H1 (cell line): ENCODE measurements at regions of chr7 and their contacts with region 1.

Region 1: DNA sequence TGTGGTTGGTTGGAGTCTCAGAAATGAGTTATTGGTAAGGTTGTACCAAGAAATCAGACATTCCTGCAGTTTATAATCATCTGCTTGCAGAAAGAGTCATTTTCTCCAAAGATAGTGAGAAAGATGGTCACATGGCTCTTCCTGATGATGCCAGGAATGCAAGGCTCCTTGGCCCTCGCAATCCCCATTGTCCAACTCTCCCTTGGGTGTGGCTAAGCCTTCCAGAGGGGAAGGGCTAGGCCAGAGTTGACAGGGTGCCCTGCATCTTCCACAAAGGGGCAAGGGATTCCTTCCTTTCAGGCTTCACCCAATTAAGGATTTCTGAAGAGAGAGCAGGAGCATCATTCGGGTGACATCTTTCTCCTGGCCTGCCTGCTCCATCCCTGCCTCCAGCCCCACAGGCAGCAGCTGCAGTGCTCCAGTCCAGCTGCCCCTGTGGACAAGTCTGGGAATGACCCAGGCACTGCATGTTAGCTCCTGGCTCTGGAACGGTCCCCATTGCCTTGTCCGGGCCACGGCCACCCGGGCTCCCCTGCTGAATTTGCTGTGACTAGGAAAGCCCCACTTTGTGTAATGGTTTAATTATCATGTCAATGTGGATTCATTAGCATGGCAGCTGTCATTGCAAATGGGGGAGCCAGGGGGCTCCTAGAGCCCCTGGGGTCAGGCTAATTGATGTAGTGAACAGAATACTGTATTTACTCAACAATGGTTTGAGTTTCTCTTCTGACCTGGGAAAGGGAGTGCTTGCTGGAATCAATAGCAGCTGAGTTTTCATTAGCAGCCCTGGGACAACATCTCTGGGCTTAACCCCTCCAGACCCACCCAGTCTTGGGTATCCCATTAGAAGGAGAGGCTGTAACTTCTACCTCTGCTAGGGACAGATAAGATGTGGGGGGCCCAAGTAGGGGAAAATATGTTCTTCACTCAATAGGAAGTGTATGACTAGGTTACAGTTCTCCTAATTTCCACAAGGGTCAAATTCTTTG is 112.6 kb upstream of the TBX20 start:
- DNase-seq: peak; percentile 43 to 67
- H3K4me3 ChIP-seq: peak overlapping the region in 1 of 4 experiments; percentile 39; a peak in 1 of 8 replicates
- H3K27ac ChIP-seq: no peak overlapping the region
- H3K4me1 ChIP-seq: peaks cover 3 to 15% (median 11%) of the 10 kb centered on the region in 4 experiments; a peak in 6 of 7 replicates
- H3K27me3 ChIP-seq: no peaks in the 10 kb centered on the region
- CTCF ChIP-seq: peak in 2 of 3 experiments; percentile 13 to 16; a peak in 2 of 4 replicates
- EP300 ChIP-seq: peak in 1 of 2 experiments; percentile 76; a peak in 1 of 3 replicates
- POLR2A ChIP-seq: no peak
- RAD21 ChIP-seq: peak in 1 of 2 experiments; percentile 12; a peak in 2 of 4 replicates

Region 2: GRCh38 chr7:35348611-35349400 is 17.7 kb before region 1 on chr7:
- CTCF ChIA-PET with region 1: interaction called, 10 read pairs
- POLR2A ChIA-PET with region 1: no interaction called
- DNase-seq: no peak
- H3K4me3 ChIP-seq: no peak overlapping the region
- H3K27ac ChIP-seq: no peak overlapping the region
- H3K4me1 ChIP-seq: peaks cover 0 to 2% (median 1%) of the 10 kb centered on the region in 4 experiments; a peak in 2 of 7 replicates
- H3K27me3 ChIP-seq: no peaks in the 10 kb centered on the region
- CTCF ChIP-seq: no peak
- EP300 ChIP-seq: no peak
- POLR2A ChIP-seq: no peak
- RAD21 ChIP-seq: no peak

Region 3: GRCh38 chr7:35380739-35381224 is 14.3 kb after region 1 on chr7:
- CTCF ChIA-PET with region 1: interaction called, 10 read pairs
- POLR2A ChIA-PET with region 1: no interaction called
- DNase-seq: no peak
- H3K4me3 ChIP-seq: no peak overlapping the region
- H3K27ac ChIP-seq: no peak overlapping the region
- H3K4me1 ChIP-seq: no peaks in the 10 kb centered on the region
- H3K27me3 ChIP-seq: no peaks in the 10 kb centered on the region
- CTCF ChIP-seq: no peak
- EP300 ChIP-seq: no peak
- POLR2A ChIP-seq: no peak
- RAD21 ChIP-seq: no peak